Activated CD8-positive, alpha-beta T cell treated with anti-CD3 and anti-CD28 coated beads for 36 hours (primary cell): ENCODE measurements at regions of chr3 and their contacts with region 1.

Region 1: DNA sequence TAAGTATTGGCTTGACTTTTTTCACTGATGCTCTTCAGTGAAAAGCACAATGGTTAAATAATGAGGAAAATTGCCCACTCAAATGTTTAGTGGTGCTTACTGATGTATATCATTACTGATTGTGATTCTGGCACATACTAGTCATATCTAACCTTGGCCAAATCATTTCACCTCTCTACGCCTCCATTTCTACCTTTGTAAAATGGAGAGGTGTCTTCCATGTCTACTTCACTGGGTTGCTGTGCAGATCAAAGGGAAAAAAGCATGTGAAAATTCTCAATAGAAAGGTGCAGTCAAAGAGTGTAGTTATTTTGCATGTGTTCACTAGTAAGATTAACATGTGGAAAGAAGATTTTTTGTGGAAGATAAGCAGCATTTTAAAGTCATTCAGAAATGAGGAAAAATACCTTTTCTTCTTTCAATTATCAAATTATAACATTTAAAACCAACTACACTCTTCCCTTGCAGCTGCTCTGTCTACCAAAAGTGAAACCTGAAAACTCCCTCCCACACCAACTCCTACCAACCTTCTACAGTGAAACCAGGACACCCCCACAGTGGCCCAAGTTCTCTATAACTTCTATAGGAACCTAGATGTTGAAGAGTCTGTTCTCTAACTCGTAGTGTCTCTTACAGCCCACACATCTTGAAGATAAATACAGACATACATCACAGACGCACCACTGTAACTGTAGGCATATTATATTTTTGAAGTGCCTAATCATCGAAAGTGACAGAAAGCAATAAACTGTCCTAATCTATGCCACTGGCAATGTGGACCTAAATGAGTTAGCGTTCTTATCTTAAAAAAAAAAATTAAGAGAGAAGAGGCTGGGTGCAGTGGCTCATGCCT is 1.4 kb downstream of the CD200R1 start:
- DNase-seq: peak; percentile 77
- ATAC-seq: peak; percentile 81
- H3K4me3 Mint-ChIP-seq: peak overlapping the region; percentile 73
- H3K27ac Mint-ChIP-seq: peak overlapping the region; percentile 82
- H3K4me1 Mint-ChIP-seq: peaks cover 85% of the 10 kb centered on the region
- H3K27me3 Mint-ChIP-seq: no peaks in the 10 kb centered on the region
- CTCF ChIP-seq: no peak

Region 2: DNA sequence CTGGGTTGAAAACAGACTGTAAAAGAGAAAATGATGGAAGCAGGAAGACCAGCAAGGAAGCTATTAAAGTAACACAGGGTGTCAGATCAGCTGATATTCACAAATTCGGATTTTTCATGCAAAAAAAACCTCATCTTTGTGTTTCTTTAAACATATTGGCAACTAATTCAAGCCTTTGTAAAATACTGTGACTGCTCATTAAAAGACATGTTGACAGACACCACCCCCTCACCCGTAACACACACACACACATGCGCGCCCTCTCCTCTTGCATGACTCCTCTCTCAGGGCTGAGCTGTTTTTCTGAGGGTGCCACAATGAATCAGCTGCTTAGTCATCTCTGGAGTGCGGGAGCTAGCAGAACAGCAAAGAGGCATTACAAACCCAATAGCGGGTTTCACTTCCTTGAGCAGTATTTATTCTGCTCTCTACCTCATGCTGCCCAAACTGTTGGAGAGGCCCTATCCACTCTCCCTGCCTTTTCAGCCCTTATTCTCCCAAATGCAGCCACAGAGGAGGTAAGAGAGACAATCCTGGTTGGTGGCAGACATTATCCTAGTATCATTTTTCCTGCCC is 296.8 kb before region 1 on chr3:
- CTCF ChIA-PET with region 1: no interaction called
- POLR2A ChIA-PET with region 1: no interaction called
- intact Hi-C with region 1: loop called (anchors 1 kb)
- DNase-seq: peak; percentile 97
- ATAC-seq: peak; percentile 94
- H3K4me3 Mint-ChIP-seq: peak overlapping the region; percentile 34
- H3K27ac Mint-ChIP-seq: peak overlapping the region; percentile 65
- H3K4me1 Mint-ChIP-seq: peaks cover 58% of the 10 kb centered on the region
- H3K27me3 Mint-ChIP-seq: peaks cover 10% of the 10 kb centered on the region
- CTCF ChIP-seq: no peak

Region 3: GRCh38 chr3:112858410-112859069 is 115.0 kb before region 1 on chr3:
- CTCF ChIA-PET with region 1: no interaction called
- POLR2A ChIA-PET with region 1: no interaction called
- intact Hi-C with region 1: loop called (anchors 5 kb)
- DNase-seq: peak; percentile 34
- ATAC-seq: peak; percentile 90
- H3K4me3 Mint-ChIP-seq: peak overlapping the region; percentile 44
- H3K27ac Mint-ChIP-seq: peak overlapping the region; percentile 81
- H3K4me1 Mint-ChIP-seq: peaks cover 25% of the 10 kb centered on the region
- H3K27me3 Mint-ChIP-seq: no peaks in the 10 kb centered on the region
- CTCF ChIP-seq: no peak

Region 4: DNA sequence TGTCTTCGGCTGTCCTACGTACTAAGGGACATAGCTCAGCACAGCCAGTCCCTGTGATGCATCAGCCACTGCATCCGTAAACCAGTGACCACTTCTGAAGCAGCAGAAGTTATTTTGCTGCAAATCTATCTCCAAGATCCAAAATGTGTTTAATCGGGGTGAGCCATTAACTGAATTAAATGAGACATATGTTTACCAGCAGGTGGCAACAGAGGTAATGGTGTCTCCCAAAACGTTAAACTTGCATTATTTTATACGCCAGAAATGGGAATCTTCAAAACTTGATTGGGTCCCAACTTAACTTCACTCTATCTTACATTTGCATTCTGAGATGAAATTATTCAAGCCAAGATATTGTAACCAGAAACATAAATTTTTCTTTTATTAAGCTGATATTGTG is 162.5 kb after region 1 on chr3:
- CTCF ChIA-PET with region 1: no interaction called
- POLR2A ChIA-PET with region 1: no interaction called
- intact Hi-C with region 1: no loop called
- DNase-seq: no peak
- ATAC-seq: no peak
- H3K4me3 Mint-ChIP-seq: no peak overlapping the region
- H3K27ac Mint-ChIP-seq: no peak overlapping the region
- H3K4me1 Mint-ChIP-seq: peaks cover 3% of the 10 kb centered on the region
- H3K27me3 Mint-ChIP-seq: no peaks in the 10 kb centered on the region
- CTCF ChIP-seq: peak; percentile 41